ENCODE measurements at regions of chr4 and their contacts with region 1.

Region 1: DNA sequence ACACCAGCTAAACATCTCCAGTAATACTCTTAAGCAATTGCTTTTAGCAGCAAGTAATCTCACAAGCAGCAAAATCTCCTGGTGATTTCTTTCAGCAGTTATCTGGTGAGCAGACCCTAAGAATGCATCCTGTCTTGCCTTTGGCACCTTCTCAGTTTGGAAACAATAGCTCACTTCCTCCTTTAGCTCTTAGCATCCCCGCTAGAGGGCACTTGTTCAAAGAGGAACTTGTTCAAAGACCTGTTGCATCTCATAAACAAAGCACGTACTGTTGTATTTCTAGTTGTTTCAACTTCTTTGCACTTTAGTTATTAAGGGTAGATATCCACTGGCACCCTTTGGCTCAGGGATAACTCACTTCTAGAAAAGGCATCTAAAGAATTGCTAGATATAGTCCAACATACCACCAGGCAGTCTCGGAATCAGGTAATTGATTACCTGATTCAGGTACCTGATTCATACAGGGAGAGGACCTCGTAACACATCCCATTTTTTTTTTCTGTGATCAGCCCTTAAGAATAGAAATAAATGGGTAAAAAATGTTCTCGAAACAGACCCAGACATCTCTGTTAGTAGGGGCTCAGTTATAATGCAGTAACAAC is 81.9 kb upstream of the QRFPR start:
- DNase-seq: peak; percentile 40
- H3K4me3 Mint-ChIP-seq: no peak overlapping the region
- H3K27ac Mint-ChIP-seq: no peak overlapping the region
- H3K4me1 Mint-ChIP-seq: peaks cover 2% of the 10 kb centered on the region
- H3K27me3 Mint-ChIP-seq: peaks cover 44% of the 10 kb centered on the region

Region 2: DNA sequence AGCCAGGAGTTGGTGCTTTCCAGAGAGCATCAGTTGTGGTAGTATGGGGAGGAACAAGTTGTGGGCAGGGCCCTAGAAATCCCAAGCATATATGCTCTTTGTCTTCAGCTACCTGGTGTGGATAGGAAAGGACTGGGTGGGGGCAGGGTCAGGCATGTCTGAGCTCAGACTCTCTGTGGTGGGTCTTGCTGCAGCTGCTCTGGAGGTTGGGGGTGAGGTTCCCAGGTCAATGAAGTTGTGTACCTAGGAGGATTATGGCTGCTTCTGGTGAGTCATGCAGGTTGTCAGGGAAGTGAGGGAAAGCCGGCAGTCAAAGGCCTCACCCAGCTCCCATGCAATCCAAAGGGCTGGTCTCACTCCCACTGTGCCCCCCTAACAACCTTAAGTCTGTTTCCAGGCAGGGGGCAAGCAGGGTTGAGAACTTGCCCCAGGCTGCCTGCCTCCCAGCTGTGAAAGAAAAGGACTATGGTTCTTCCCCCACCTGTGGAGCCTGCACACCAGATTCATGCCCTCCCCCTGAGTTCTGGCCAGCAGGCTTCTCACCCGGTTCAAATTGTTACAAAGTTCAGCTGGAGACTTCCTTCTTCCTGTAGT is 51.5 kb before region 1 on chr4:
- CTCF ChIA-PET with region 1: no interaction called
- POLR2A ChIA-PET with region 1: no interaction called
- DNase-seq: no peak
- H3K4me3 Mint-ChIP-seq: no peak overlapping the region
- H3K27ac Mint-ChIP-seq: no peak overlapping the region
- H3K4me1 Mint-ChIP-seq: peaks cover 2% of the 10 kb centered on the region
- H3K27me3 Mint-ChIP-seq: peaks cover 31% of the 10 kb centered on the region

Region 3: GRCh38 chr4:121472937-121473721 is 10.4 kb after region 1 on chr4:
- CTCF ChIA-PET with region 1: interaction called, 10 read pairs
- POLR2A ChIA-PET with region 1: no interaction called
- DNase-seq: no peak
- H3K4me3 Mint-ChIP-seq: no peak overlapping the region
- H3K27ac Mint-ChIP-seq: no peak overlapping the region
- H3K4me1 Mint-ChIP-seq: peaks cover 3% of the 10 kb centered on the region
- H3K27me3 Mint-ChIP-seq: peaks cover 12% of the 10 kb centered on the region

Region 4: GRCh38 chr4:121484633-121485032 is 21.9 kb after region 1 on chr4:
- CTCF ChIA-PET with region 1: interaction called, 10 read pairs
- POLR2A ChIA-PET with region 1: no interaction called
- DNase-seq: no peak
- H3K4me3 Mint-ChIP-seq: no peak overlapping the region
- H3K27ac Mint-ChIP-seq: no peak overlapping the region
- H3K4me1 Mint-ChIP-seq: no peaks in the 10 kb centered on the region
- H3K27me3 Mint-ChIP-seq: peaks cover 30% of the 10 kb centered on the region

Region 5: GRCh38 chr4:121554382-121554781 is 91.6 kb after region 1 on chr4:
- CTCF ChIA-PET with region 1: no interaction called
- POLR2A ChIA-PET with region 1: no interaction called
- DNase-seq: no peak
- H3K4me3 Mint-ChIP-seq: no peak overlapping the region
- H3K27ac Mint-ChIP-seq: no peak overlapping the region
- H3K4me1 Mint-ChIP-seq: no peaks in the 10 kb centered on the region
- H3K27me3 Mint-ChIP-seq: peaks cover 19% of the 10 kb centered on the region

Region 6: DNA sequence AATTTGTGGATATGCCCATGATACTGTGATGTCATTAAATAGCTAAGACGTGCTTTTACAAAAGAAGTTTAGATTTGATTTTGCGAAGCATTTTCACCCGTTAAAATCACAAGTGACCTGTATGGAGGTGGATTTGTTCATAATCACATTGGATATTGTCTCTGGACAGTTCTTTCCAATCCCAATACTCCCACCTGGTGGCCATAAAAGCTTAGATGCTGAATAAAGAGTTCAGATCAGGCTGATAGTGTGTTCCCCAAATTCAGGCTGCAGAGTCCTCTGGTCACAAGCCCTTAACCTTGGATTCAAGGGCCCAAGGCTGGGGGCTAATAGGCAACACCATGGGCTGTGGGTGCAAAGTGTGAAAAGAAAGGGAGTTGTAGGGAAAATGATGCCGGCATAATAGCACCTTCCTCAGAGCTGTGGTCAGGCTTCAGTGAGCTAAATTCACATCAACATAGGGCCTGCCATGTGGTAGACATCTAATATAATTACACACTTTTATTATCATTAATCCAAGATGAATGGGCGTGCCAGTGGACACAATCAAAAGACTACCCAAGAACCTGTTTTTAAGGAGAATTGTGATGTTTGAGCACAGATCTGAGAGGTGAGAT is 274.1 kb after region 1 on chr4:
- CTCF ChIA-PET with region 1: interaction called, 31 read pairs
- POLR2A ChIA-PET with region 1: no interaction called
- DNase-seq: no peak
- H3K4me3 Mint-ChIP-seq: no peak overlapping the region
- H3K27ac Mint-ChIP-seq: no peak overlapping the region
- H3K4me1 Mint-ChIP-seq: no peaks in the 10 kb centered on the region
- H3K27me3 Mint-ChIP-seq: peaks cover 4% of the 10 kb centered on the region

Region 7: GRCh38 chr4:121749225-121749624 is 286.5 kb after region 1 on chr4:
- CTCF ChIA-PET with region 1: no interaction called
- POLR2A ChIA-PET with region 1: no interaction called
- DNase-seq: no peak
- H3K4me3 Mint-ChIP-seq: no peak overlapping the region
- H3K27ac Mint-ChIP-seq: no peak overlapping the region
- H3K4me1 Mint-ChIP-seq: no peaks in the 10 kb centered on the region
- H3K27me3 Mint-ChIP-seq: peaks cover 45% of the 10 kb centered on the region

Measured in activated CD4-positive, alpha-beta memory T cell treated with anti-CD3 and anti-CD28 coated beads, Interleukin-2, amount 10 ng/mL, durations not matched to agents 7 days and 5 days (primary cell).